AG04449 (cell line): ENCODE measurements at regions of chr1 and their contacts with region 1.

Region 1: DNA sequence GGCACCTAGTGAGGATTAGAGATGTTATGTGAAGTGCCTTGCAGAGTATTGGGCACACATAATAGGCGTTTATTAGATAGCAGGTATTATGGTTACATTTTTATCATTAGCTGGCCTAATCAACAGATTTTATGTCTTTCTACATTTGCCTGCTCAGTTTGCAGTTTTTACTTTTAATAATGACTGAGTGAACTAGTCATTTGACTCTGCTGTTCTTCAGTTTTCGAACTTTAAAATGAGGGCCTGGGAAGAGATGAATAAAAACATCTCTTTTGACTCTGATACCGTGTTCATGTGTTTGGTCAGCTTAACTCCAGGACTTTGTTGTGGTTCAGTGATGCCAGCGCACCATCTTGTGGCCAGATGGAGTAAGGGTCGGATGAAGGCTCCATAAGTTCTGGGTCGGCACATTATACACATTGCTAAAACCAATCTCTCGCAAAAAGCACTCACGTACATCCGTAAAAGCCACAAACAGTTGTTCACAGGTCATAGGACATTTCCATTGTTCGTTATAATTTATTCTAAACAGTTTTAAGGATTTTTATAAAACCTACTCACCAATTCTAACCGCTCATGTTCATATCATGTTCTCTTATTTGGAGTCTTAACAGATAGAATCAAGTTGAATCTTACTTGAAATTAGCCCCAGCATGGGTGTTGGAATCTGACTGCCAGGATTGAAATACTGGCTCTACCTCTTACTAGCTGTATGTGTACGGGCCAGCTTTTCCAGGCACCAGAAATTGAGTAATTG is 78.4 kb upstream of the GPR88 start:
- DNase-seq: peak; percentile 26
- H3K4me3 ChIP-seq: no peak overlapping the region
- CTCF ChIP-seq: peak; percentile 89

Region 2: GRCh38 chr1:99808391-99809115 is 651.0 kb before region 1 on chr1:
- CTCF ChIA-PET with region 1: interaction called, 101 read pairs
- POLR2A ChIA-PET with region 1: no interaction called
- DNase-seq: peak; percentile 86
- H3K4me3 ChIP-seq: peak overlapping the region; percentile 6; the same call in 1 of the 2 replicates
- CTCF ChIP-seq: peak; percentile 23

Region 3: DNA sequence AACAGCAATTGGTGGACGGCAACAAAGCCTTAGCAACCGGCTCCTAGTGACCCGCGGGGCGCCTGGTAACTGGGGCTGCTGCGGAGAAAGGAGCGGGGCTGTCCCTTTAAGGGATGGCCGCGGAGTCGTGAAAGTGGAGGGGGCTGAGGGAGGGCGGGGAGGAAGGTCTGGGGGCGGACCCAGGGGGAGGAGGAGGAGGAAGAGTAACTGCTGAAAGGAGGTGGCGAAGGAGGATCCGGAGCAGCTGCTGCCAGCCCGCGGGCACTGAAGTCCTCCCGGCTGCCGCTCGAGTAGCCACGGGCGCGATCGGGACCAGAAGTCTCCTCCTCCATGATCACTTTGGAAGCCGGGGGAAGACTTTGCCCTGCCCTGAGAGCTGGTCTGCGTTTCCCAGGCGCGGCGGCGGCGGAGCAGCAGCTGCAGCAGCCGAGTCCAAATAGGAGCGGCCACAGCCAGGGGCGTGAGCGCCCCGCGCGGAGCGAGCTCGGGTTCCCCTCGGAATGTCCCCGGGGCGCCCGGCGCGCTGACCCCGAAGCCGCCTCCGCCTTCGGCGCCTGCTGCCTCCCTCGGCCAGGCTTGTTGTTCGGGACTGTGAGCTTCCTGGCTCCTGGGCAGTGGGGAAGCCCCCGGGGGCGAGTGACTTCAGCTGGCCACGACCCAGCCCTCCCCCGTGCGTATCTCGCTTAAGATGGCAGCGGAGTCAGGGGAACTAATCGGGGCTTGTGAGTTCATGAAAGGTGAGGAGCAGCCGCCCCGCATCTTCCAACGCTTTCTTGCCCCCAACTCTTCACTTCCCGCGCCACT is 107.1 kb before region 1 on chr1 and contains the start of gene CDC14A:
- CTCF ChIA-PET with region 1: interaction called, 11 read pairs
- POLR2A ChIA-PET with region 1: no interaction called
- DNase-seq: peak; percentile 71
- H3K4me3 ChIP-seq: peak within 1 kb of the TSS; percentile 85
- CTCF ChIP-seq: no peak

Region 4: DNA sequence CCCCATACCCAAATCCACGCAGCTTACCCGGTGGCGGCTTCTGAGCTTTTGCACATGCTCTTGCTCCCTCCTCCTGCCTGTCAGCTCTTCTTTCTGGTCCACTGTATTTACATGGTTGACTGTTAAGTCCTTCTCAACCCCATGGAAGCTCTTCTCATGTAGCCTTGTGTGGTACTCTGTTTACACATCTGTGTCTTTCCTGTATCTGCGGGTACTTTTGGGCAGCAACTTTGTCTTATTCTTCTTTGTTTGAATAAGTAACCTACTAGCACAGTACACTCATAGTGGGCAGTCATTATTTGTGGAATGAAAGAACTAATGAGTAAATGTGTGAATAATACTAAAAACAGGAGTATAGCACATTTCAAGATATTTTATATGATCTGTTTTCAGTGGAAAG is 10.1 kb before region 1 on chr1:
- CTCF ChIA-PET with region 1: interaction called, 38 read pairs
- POLR2A ChIA-PET with region 1: no interaction called
- DNase-seq: no peak
- H3K4me3 ChIP-seq: no peak overlapping the region
- CTCF ChIP-seq: no peak

Region 5: GRCh38 chr1:100502052-100502783 is 42.7 kb after region 1 on chr1:
- CTCF ChIA-PET with region 1: interaction called, 19 read pairs
- POLR2A ChIA-PET with region 1: no interaction called
- DNase-seq: no peak
- H3K4me3 ChIP-seq: no peak overlapping the region
- CTCF ChIP-seq: no peak

Region 6: DNA sequence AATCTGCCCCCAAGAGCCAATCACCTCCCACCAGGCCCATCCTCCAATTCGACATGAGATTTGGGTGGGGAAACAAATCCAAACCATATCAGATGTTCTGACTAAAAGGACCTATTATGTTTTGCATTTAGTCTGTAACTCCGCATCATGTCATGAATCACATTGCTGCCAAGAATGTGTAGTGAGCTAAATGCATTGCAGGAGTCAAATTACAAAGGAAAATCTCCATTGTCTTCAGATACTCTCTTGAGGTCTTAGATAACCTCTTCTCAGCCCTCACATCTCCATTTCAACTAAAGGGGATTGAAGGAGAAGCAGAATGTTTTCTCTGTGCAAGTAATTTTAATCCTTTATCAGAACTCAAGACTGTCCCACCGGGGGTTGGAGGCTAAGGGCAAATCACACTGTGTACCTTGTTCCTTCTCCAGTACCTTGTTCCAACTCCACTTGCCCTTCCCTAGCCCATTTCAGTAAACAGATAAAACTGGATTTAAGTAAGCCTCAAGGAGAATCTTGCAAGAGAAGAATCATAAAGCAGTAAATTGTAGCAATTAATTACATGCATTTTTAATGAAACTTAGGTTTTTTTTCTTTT is 401.0 kb after region 1 on chr1:
- CTCF ChIA-PET with region 1: interaction called, 700 read pairs
- POLR2A ChIA-PET with region 1: no interaction called
- DNase-seq: no peak
- H3K4me3 ChIP-seq: no peak overlapping the region
- CTCF ChIP-seq: no peak

Region 7: GRCh38 chr1:100883963-100884362 is 424.4 kb after region 1 on chr1:
- CTCF ChIA-PET with region 1: interaction called, 16 read pairs
- POLR2A ChIA-PET with region 1: no interaction called
- DNase-seq: peak; percentile 26
- H3K4me3 ChIP-seq: no peak overlapping the region
- CTCF ChIP-seq: peak; percentile 12